Left cardiac atrium (tissue), 4 donors: ENCODE measurements at regions of chr18 and their contacts with region 1.

Region 1: DNA sequence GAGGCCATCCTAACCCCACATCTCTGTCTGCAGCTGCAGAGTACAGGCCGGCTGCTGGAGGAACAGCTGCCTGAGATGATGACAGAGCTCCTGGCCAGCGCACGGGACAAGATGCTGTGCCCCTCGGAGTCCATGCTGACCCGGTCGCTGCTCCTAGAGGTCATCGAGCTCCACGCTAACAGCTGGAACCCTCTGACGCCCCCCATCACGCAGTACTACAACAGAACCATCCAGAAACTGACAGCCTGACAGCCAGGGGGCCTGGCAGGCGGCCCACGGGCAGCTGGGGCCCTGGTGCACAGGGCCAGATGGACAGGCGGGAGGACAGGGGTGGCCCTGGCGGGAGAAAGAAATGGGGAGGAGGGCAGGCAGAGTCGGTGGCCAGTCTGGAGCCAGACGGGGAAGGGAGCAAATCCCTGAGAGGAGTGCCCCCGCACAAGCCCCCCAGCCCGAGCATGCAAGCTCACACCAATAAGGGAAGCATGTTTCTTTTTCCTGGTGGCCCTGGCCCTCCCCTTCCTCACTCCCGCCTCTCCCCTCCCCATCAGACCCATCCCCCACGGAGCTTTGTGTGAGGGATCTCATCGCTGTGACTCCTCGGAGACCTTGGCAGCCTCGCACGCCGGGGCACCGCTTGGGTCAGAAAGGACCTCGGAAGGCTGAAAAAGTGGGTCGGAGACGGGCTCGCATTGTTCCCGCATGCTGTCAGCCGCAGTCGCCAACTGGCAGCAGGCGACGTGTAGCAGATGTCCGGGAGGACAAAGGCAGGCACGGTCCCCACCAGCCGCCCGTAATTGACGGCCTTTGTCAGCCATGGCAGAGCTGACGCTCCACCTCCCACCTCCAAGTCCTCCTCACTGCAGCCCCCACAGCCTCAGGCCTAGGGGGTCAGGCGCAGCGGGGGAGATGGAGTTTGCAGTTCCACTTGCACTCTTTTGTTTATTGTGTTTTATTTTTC is 91.2 kb downstream of the SMAD7 start:
- DNase-seq: peak; percentile 60
- ATAC-seq: peak; percentile 32

Region 2: GRCh38 chr18:48928787-48929186 is 69.2 kb after region 1 on chr18:
- intact Hi-C with region 1: loop called in 1 of 2 experiments (anchors 10 kb)
- DNase-seq: peak; percentile 85
- ATAC-seq: peak; percentile 39 to 64